GM12878 (cell line): ENCODE measurements at regions of chr11 and their contacts with region 1.

Region 1: DNA sequence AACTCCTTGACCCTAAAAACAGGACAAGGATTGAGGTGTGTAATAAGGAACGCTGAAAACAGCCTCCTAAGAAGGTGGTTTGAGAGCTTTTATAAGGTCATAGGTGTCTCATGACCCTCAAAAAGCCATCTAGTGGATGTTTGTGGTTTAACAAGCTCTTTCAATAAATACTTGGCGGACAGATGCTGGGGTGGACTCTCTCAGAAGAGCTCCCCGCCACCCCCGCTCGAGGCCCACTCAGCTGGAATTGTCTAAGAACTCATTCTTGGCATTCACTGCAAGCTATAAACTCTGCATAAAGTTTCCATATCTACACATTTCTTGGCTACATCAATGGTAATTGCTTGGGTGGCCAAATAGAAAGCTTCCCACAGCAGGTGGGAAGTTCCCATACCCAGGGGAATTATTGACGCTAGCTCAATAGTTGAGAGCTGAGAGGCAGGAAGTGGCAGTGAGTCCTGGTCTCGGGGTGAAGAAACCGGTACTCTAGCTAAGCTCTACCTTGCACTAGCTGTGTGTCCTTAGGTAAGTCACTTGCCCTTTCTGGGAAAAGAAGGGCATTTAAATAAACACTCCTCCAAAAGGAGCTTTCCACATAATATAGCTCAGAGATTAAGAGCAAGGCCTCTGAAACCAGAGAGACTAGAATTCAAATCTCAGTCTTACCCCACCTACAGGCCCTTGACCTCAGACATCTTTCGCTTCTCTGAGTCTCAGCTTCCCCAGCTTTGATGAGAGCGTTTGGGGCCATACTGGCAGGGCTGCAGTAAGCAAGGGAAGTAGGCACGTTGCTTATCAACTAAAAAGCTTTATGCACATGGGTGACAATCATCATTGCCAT is 6.4 kb downstream of the MS4A15 start:
- DNase-seq: peak; percentile 94
- ATAC-seq: peak; percentile 82
- H3K4me3 ChIP-seq: peak overlapping the region; percentile 0; the same call in 1 of the 2 replicates
- H3K27ac ChIP-seq: peak overlapping the region; percentile 96
- H3K4me1 ChIP-seq: peaks cover 61% of the 10 kb centered on the region
- H3K27me3 ChIP-seq: no peaks in the 10 kb centered on the region
- CTCF ChIP-seq: peak; percentile 35 to 64 (median 54); a peak in 5 of 6 replicates
- EP300 ChIP-seq: peak; percentile 70 to 79; a peak in 3 of 4 replicates
- POLR2A ChIP-seq: no peak; the same call in 1 of the 2 replicates
- RAD21 ChIP-seq: peak; percentile 36; the same call in 1 of the 2 replicates

Region 2: GRCh38 chr11:59186130-59186594 is 1576.9 kb before region 1 on chr11:
- CTCF ChIA-PET with region 1: no interaction called
- POLR2A ChIA-PET with region 1: no interaction called
- RAD21 ChIA-PET with region 1: no interaction called
- SMC1A ChIA-PET with region 1: no interaction called
- in situ Hi-C with region 1: loop called (anchors 25 kb)
- intact Hi-C with region 1: no loop called
- DNase-seq: no peak
- ATAC-seq: peak; percentile 88
- H3K4me3 ChIP-seq: no peak overlapping the region
- H3K27ac ChIP-seq: no peak overlapping the region
- H3K4me1 ChIP-seq: peaks cover 10% of the 10 kb centered on the region
- H3K27me3 ChIP-seq: no peaks in the 10 kb centered on the region
- CTCF ChIP-seq: peak; percentile 67 to 92 (median 89)
- EP300 ChIP-seq: no peak
- POLR2A ChIP-seq: no peak
- RAD21 ChIP-seq: peak; percentile 46

Region 3: GRCh38 chr11:60100516-60100915 is 662.6 kb before region 1 on chr11:
- CTCF ChIA-PET with region 1: no interaction called
- POLR2A ChIA-PET with region 1: no interaction called
- RAD21 ChIA-PET with region 1: no interaction called
- SMC1A ChIA-PET with region 1: no interaction called
- in situ Hi-C with region 1: no loop called
- intact Hi-C with region 1: no loop called
- DNase-seq: no peak
- ATAC-seq: no peak
- H3K4me3 ChIP-seq: no peak overlapping the region
- H3K27ac ChIP-seq: no peak overlapping the region
- H3K4me1 ChIP-seq: no peaks in the 10 kb centered on the region
- H3K27me3 ChIP-seq: no peaks in the 10 kb centered on the region
- CTCF ChIP-seq: no peak
- EP300 ChIP-seq: no peak
- POLR2A ChIP-seq: no peak
- RAD21 ChIP-seq: no peak

Region 4: GRCh38 chr11:60334005-60334620 is 429.0 kb before region 1 on chr11:
- CTCF ChIA-PET with region 1: interaction called, 3 read pairs
- POLR2A ChIA-PET with region 1: no interaction called
- RAD21 ChIA-PET with region 1: no interaction called
- SMC1A ChIA-PET with region 1: no interaction called
- in situ Hi-C with region 1: no loop called
- intact Hi-C with region 1: loop called (anchors 10 kb)
- DNase-seq: no peak
- ATAC-seq: peak; percentile 65
- H3K4me3 ChIP-seq: no peak overlapping the region
- H3K27ac ChIP-seq: no peak overlapping the region
- H3K4me1 ChIP-seq: peaks cover 22% of the 10 kb centered on the region
- H3K27me3 ChIP-seq: no peaks in the 10 kb centered on the region
- CTCF ChIP-seq: peak; percentile 73 to 86 (median 74)
- EP300 ChIP-seq: no peak
- POLR2A ChIP-seq: no peak
- RAD21 ChIP-seq: peak; percentile 67

Region 5: DNA sequence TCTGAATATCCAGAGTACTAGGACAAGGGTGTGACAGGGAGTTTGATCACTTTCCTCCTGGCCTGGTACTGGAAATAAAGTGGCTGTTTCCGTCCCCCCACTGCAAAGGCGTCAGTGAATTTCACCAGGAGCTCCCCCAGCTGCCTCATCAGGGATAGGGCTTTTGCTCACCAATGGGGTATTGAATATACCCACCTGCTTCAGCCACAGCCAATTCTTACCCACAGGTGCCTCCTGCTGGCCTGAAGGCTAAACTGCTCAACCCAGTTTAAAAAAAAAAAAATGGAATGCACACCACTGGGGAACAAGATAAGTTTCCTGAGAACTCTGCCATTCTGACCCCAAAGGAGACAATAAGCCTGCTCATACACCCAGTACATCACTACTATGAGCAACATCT is 128.9 kb before region 1 on chr11:
- CTCF ChIA-PET with region 1: interaction called, 23 read pairs
- POLR2A ChIA-PET with region 1: no interaction called
- RAD21 ChIA-PET with region 1: interaction called, 13 read pairs
- SMC1A ChIA-PET with region 1: interaction called, 25 read pairs
- in situ Hi-C with region 1: no loop called
- intact Hi-C with region 1: loop called (anchors 5 kb)
- DNase-seq: peak; percentile 19
- ATAC-seq: peak; percentile 85
- H3K4me3 ChIP-seq: no peak overlapping the region
- H3K27ac ChIP-seq: 0 out of 2 replicates have a peak overlapping the region, but pooled peaks have one; percentile 2
- H3K4me1 ChIP-seq: peaks cover 27% of the 10 kb centered on the region
- H3K27me3 ChIP-seq: no peaks in the 10 kb centered on the region
- CTCF ChIP-seq: peak; percentile 43 to 60 (median 56)
- EP300 ChIP-seq: no peak
- POLR2A ChIP-seq: no peak
- RAD21 ChIP-seq: peak; percentile 76

Region 6: GRCh38 chr11:60700689-60701480 is 62.2 kb before region 1 on chr11:
- CTCF ChIA-PET with region 1: interaction called, 84 read pairs
- POLR2A ChIA-PET with region 1: interaction called, 6 read pairs
- RAD21 ChIA-PET with region 1: interaction called, 21 read pairs
- SMC1A ChIA-PET with region 1: interaction called, 45 read pairs
- in situ Hi-C with region 1: no loop called
- intact Hi-C with region 1: loop called (anchors 1 kb)
- DNase-seq: no peak
- ATAC-seq: peak; percentile 87
- H3K4me3 ChIP-seq: no peak overlapping the region
- H3K27ac ChIP-seq: no peak overlapping the region
- H3K4me1 ChIP-seq: no peaks in the 10 kb centered on the region
- H3K27me3 ChIP-seq: no peaks in the 10 kb centered on the region
- CTCF ChIP-seq: peak; percentile 54 to 56 (median 55); a peak in 5 of 6 replicates
- EP300 ChIP-seq: no peak
- POLR2A ChIP-seq: no peak
- RAD21 ChIP-seq: peak; percentile 64

Region 7: GRCh38 chr11:60821827-60822599 is 58.9 kb after region 1 on chr11:
- CTCF ChIA-PET with region 1: interaction called, 15 read pairs
- POLR2A ChIA-PET with region 1: interaction called, 5 read pairs
- RAD21 ChIA-PET with region 1: interaction called, 30 read pairs
- SMC1A ChIA-PET with region 1: interaction called, 37 read pairs
- in situ Hi-C with region 1: no loop called
- intact Hi-C with region 1: no loop called
- DNase-seq: peak; percentile 19
- ATAC-seq: peak; percentile 84
- H3K4me3 ChIP-seq: no peak overlapping the region
- H3K27ac ChIP-seq: no peak overlapping the region
- H3K4me1 ChIP-seq: no peaks in the 10 kb centered on the region
- H3K27me3 ChIP-seq: no peaks in the 10 kb centered on the region; a peak in 1 of 4 replicates
- CTCF ChIP-seq: no peak
- EP300 ChIP-seq: 0 out of 4 replicates have a peak, but pooled peaks of 1 of the 2 experiments have one; percentile 29
- POLR2A ChIP-seq: no peak
- RAD21 ChIP-seq: no peak

Region 8: DNA sequence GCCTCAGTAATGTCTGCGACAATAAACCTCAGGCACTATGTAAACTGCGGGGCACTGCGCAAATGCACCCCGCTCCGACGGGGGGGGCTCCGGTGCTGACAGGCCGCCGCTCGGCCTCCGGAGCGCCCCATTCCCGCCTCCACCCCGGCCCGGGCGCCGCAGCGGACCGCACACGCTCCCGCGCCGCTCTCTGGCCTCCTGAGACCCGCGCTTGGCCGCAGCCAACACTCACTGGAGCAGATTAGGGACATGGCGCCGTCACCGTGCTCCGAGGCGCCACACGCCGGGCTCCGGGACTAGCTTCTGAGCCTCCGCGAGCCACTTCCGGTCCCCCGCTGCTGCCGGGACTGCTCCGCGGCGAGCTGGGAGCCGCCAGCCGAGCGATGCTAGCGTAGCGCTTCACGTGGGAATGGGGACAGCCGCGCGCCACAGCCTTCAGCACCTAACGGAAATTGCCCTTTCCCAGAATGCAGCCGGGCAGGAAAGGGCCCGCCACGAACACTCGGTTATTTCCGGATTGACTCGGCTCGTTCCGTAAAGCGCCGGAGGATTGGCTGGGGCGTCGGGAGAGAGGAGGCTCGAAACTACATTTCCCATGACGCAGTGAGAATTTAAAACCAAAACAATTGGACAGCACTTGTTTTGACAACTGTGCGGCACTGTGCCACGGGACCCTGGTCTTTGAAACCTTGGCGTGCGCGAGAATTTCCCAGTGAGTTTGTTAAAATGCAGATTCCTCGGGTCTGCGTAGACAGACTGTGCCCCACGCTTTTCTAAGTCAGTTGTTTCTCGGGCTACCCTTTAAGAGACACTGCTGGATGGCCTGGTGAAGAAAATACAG is 143.3 kb after region 1 on chr11 and contains the start of gene PRPF19:
- CTCF ChIA-PET with region 1: interaction called, 10 read pairs
- POLR2A ChIA-PET with region 1: interaction called, 3 read pairs
- RAD21 ChIA-PET with region 1: interaction called, 8 read pairs
- SMC1A ChIA-PET with region 1: interaction called, 6 read pairs
- in situ Hi-C with region 1: no loop called
- intact Hi-C with region 1: loop called (anchors 5 kb)
- DNase-seq: peak; percentile 93
- ATAC-seq: peak; percentile 87
- H3K4me3 ChIP-seq: peak within 1 kb of the TSS; percentile 86
- H3K27ac ChIP-seq: peak within 1 kb of the TSS; percentile 89
- H3K4me1 ChIP-seq: peaks cover 36% of the 10 kb centered on the region
- H3K27me3 ChIP-seq: no peaks in the 10 kb centered on the region
- CTCF ChIP-seq: no peak
- EP300 ChIP-seq: 0 out of 4 replicates have a peak, but pooled peaks of 1 of the 2 experiments have one; percentile 34
- POLR2A ChIP-seq: peak; percentile 99
- RAD21 ChIP-seq: no peak
- polyA plus RNA-seq, gene PRPF19: 8.7 to 27.7 TPM